SK-N-SH (cell line): ENCODE measurements at regions of chr4 and their contacts with region 1.

Region 1: DNA sequence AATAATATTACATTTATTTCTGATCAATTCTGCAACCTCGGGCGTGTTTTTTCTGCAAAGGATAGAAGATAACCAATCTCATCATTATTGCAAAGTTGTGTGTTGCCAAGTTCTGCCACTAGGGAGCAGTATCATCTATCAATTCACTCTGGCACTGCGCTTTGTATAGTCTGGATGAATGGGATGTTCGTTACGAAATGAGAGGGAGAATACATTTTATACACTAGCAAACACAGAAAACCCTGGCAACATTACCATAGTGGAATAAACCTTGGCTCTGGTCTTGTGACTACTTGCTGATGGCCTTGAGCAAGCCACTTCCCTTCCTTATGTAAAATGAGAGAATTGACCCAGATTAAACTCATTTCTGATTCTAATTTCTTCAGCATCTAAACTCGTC is 97.5 kb upstream of the ZNF518B start:
- DNase-seq: peak; percentile 44
- H3K4me3 ChIP-seq: no peak overlapping the region
- H3K27ac ChIP-seq: no peak overlapping the region
- H3K4me1 ChIP-seq: no peaks in the 10 kb centered on the region
- H3K27me3 ChIP-seq: no peaks in the 10 kb centered on the region; the same call in 1 of the 2 replicates
- CTCF ChIP-seq: peak; percentile 87
- EP300 ChIP-seq: no peak
- RAD21 ChIP-seq: peak; percentile 73

Region 2: DNA sequence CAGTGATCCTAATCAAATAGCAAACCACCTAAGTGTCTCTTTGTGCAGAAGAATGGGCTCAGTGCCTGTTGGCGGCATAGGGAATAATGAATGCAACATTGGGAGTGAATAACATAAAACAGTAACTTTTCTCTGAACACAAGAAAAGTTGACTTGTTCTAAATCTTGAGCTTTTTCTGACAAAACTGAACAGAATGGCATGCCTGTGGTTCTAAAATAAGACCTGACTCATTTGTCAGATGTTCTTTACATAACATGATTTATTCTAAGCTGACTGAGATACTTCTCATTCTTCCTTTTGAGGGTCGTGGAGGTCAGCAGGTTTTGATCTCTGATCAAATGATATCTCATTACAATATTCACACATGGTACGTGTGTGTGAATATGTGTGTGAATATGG is 272.7 kb before region 1 on chr4:
- CTCF ChIA-PET with region 1: no interaction called
- POLR2A ChIA-PET with region 1: no interaction called
- DNase-seq: no peak
- H3K4me3 ChIP-seq: no peak overlapping the region
- H3K27ac ChIP-seq: peak overlapping the region in 1 of 2 experiments; percentile 53; a peak in 2 of 4 replicates
- H3K4me1 ChIP-seq: no peaks in the 10 kb centered on the region
- H3K27me3 ChIP-seq: no peaks in the 10 kb centered on the region
- CTCF ChIP-seq: no peak
- EP300 ChIP-seq: no peak
- RAD21 ChIP-seq: no peak

Region 3: DNA sequence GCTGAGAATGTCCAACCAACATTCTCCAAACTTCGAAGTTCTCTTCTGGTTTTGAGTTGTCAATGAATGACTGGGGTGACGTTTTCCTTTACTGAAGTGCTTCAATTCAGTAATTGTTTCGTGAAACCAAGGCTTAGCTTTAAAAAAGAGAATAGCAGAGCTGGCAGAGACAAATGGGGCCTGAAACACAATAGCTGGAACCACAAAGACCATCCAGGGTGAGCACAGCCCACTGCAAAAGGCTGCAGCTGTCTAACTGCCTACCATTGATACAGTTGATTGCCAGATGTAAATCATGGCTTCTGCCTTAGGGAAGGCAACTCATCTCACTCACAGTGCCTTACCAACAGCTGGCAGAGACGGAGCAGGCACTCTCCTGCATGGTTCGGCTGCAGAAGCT is 18.8 kb before region 1 on chr4:
- CTCF ChIA-PET with region 1: interaction called, 16 read pairs
- POLR2A ChIA-PET with region 1: no interaction called
- DNase-seq: no peak
- H3K4me3 ChIP-seq: no peak overlapping the region
- H3K27ac ChIP-seq: no peak overlapping the region
- H3K4me1 ChIP-seq: no peaks in the 10 kb centered on the region
- H3K27me3 ChIP-seq: no peaks in the 10 kb centered on the region; the same call in 1 of the 2 replicates
- CTCF ChIP-seq: no peak
- EP300 ChIP-seq: no peak
- RAD21 ChIP-seq: no peak

Region 4: GRCh38 chr4:10577508-10578426 is 23.1 kb after region 1 on chr4:
- CTCF ChIA-PET with region 1: no interaction called
- POLR2A ChIA-PET with region 1: no interaction called
- DNase-seq: no peak
- H3K4me3 ChIP-seq: no peak overlapping the region
- H3K27ac ChIP-seq: no peak overlapping the region
- H3K4me1 ChIP-seq: no peaks in the 10 kb centered on the region
- H3K27me3 ChIP-seq: no peaks in the 10 kb centered on the region; the same call in 1 of the 2 replicates
- CTCF ChIP-seq: no peak
- EP300 ChIP-seq: no peak
- RAD21 ChIP-seq: no peak

Region 5: GRCh38 chr4:10599574-10599973 is 44.9 kb after region 1 on chr4:
- CTCF ChIA-PET with region 1: no interaction called
- POLR2A ChIA-PET with region 1: no interaction called
- DNase-seq: no peak
- H3K4me3 ChIP-seq: no peak overlapping the region
- H3K27ac ChIP-seq: no peak overlapping the region
- H3K4me1 ChIP-seq: no peaks in the 10 kb centered on the region
- H3K27me3 ChIP-seq: no peaks in the 10 kb centered on the region
- CTCF ChIP-seq: no peak
- EP300 ChIP-seq: no peak
- RAD21 ChIP-seq: no peak